PC-9 (cell line): ENCODE measurements at regions of chr6 and their contacts with region 1.

Region 1: GRCh38 chr6:166747644-166748620 is 120.9 kb upstream of the RPS6KA2 start:
- DNase-seq: peak; percentile 25 to 44
- H3K4me3 ChIP-seq: no peak overlapping the region
- H3K27ac ChIP-seq: no peak overlapping the region
- H3K4me1 ChIP-seq: no peaks in the 10 kb centered on the region
- H3K27me3 ChIP-seq: no peaks in the 10 kb centered on the region
- CTCF ChIP-seq: no peak

Region 2: GRCh38 chr6:166596776-166597507 is 151.0 kb before region 1 on chr6:
- CTCF ChIA-PET with region 1: interaction called, 13 read pairs
- POLR2A ChIA-PET with region 1: no interaction called
- intact Hi-C with region 1: no loop called
- DNase-seq: no peak
- H3K4me3 ChIP-seq: no peak overlapping the region
- H3K27ac ChIP-seq: no peak overlapping the region
- H3K4me1 ChIP-seq: no peaks in the 10 kb centered on the region
- H3K27me3 ChIP-seq: no peaks in the 10 kb centered on the region
- CTCF ChIP-seq: no peak

Region 3: DNA sequence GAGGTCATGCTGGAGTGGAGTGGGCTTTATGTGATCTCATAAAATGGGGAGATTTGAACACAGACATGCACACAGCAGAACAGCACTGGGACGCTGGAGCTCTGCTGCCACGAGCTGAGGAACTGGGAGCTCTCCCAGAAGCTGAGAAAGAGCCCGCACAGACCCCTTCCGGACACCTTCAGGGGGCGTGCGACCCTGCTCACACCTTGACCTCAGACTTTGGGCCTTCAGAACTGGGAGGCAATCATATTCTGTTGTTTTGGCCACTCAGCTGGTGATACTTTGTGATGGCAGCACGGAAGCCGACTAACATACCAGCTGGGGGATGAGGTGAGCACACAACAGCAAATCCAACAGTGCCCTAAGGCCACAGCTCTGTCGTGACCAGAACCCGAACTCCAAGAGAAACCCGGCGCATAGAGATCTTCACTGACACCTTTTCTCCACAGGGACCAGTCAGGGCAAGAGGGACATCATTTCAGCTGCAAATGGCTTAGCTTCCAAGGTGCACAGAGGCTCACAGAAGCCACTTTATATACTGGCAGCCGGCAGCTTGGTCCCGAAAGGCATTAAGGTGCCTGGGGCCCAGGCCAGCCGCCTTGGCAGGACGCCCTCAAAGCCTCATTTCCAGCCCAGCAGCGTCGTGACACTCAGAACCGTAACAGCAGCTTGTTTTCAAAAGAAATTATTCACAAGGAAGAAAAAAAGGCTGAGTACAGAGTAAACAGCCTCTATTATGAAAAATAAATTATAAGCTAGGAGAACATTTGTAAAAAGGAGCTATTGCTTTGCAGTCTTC is 119.1 kb after region 1 on chr6:
- CTCF ChIA-PET with region 1: no interaction called
- POLR2A ChIA-PET with region 1: no interaction called
- intact Hi-C with region 1: no loop called
- DNase-seq: no peak
- H3K4me3 ChIP-seq: no peak overlapping the region
- H3K27ac ChIP-seq: no peak overlapping the region
- H3K4me1 ChIP-seq: no peaks in the 10 kb centered on the region
- H3K27me3 ChIP-seq: peaks cover under 1% of the 10 kb centered on the region; the same call in 1 of the 2 replicates
- CTCF ChIP-seq: no peak